Activated CD4-positive, alpha-beta memory T cell treated with anti-CD3 and anti-CD28 coated beads for 36 hours (primary cell): ENCODE measurements at regions of chr22 and their contacts with region 1.

Region 1: GRCh38 chr22:39319270-39320022 is at the start of gene RPL3:
- DNase-seq: peak; percentile 97
- H3K4me3 Mint-ChIP-seq: peak within 1 kb of the TSS; percentile 100
- H3K27ac Mint-ChIP-seq: peak within 1 kb of the TSS; percentile 99
- H3K4me1 Mint-ChIP-seq: peaks cover 37% of the 10 kb centered on the region
- H3K27me3 Mint-ChIP-seq: no peaks in the 10 kb centered on the region
- total RNA-seq, gene RPL3: 2,986 to 3,013 TPM

Region 2: DNA sequence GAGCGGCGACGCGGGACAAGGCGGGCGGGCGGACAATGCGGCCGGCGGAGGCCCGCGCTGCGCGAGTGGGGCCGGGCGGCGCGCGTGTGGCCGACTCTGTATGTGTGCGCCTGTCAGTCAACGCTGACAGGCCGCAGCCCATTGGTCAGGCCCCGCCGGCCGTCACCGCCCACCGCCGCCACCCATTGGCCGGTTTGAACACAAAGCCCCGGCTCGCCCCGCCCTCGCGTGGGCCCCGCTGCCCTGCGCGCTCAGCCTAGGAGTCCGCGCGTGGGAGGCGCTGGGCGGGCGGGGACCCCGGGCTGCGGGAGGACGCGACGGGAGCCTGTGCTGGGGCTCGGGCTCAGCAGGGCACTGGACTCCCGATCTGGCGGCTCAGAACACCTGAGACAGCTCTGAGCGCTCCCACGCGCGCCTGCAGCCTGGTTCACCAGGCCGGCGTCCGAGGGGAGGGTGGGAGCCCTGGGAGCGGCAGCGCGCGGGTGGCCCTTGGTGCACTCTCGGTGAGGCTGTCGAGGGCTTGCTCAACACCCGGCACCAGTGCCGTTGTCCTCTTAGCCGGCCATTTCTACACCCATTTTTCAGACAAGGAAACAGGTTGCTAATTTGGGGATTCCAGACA is 563.4 kb before region 1 on chr22 and contains the start of gene SUN2:
- CTCF ChIA-PET with region 1: no interaction called
- POLR2A ChIA-PET with region 1: interaction called, 4 read pairs
- intact Hi-C with region 1: loop called (anchors 10 kb)
- DNase-seq: peak; percentile 95
- H3K4me3 Mint-ChIP-seq: peak within 1 kb of the TSS; percentile 88
- H3K27ac Mint-ChIP-seq: peak within 1 kb of the TSS; percentile 93
- H3K4me1 Mint-ChIP-seq: peaks cover 55% of the 10 kb centered on the region
- H3K27me3 Mint-ChIP-seq: no peaks in the 10 kb centered on the region
- total RNA-seq, gene SUN2: 159 to 168 TPM

Region 3: DNA sequence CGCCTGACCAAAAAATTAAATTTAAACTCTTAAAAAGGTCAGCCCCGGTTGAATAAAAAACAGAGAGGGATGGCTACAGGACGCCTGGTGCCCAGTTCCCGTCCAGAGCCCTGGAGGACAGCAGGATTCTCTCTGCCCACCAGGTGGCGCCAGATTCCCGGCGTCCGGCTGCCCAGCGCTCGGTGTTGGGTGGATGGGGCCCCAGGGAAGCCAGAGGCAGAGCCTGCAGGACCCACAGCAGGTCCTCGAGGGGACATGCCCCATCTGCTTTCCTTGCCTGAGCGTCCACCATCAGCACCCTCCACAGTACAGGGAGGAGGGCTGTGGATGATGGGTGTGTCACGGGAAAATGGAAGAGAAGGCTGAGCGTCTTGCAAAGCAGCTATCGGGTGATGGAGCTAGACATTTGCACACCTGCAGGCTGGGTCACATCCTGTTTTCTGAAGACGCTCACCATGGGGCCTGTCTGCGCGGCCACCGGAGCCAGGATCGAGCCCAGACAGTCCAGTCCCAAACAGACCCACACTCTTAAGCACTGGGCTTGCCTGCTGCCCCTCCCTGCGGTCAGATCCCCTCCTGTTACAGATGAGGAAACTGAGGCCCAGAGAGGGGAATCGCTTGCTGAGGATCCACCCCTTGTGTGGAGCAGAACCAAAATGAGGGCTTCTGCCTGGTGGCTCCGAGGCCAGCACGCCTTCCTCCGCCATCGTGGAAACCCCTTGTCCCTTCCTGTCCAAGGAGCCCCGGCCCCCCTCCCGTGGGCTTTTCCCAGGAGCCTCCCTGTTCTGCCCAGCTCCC is 148.4 kb before region 1 on chr22:
- CTCF ChIA-PET with region 1: interaction called, 68 read pairs
- POLR2A ChIA-PET with region 1: interaction called, 18 read pairs
- intact Hi-C with region 1: loop called (anchors 1 kb)
- DNase-seq: peak; percentile 91
- H3K4me3 Mint-ChIP-seq: peak overlapping the region; percentile 37
- H3K27ac Mint-ChIP-seq: peak overlapping the region; percentile 43
- H3K4me1 Mint-ChIP-seq: peaks cover 40% of the 10 kb centered on the region
- H3K27me3 Mint-ChIP-seq: peaks cover 1% of the 10 kb centered on the region

Region 4: GRCh38 chr22:39332441-39333064 is 13.1 kb after region 1 on chr22:
- CTCF ChIA-PET with region 1: interaction called, 23 read pairs
- POLR2A ChIA-PET with region 1: interaction called, 29 read pairs
- intact Hi-C with region 1: no loop called
- DNase-seq: no peak
- H3K4me3 Mint-ChIP-seq: no peak overlapping the region
- H3K27ac Mint-ChIP-seq: peak overlapping the region; percentile 58
- H3K4me1 Mint-ChIP-seq: peaks cover 14% of the 10 kb centered on the region
- H3K27me3 Mint-ChIP-seq: no peaks in the 10 kb centered on the region

Region 5: GRCh38 chr22:39502109-39502788 is 182.8 kb after region 1 on chr22 and contains the start of gene MIEF1:
- CTCF ChIA-PET with region 1: interaction called, 3 read pairs
- POLR2A ChIA-PET with region 1: interaction called, 10 read pairs
- intact Hi-C with region 1: no loop called
- DNase-seq: peak; percentile 98
- H3K4me3 Mint-ChIP-seq: peak within 1 kb of the TSS; percentile 96
- H3K27ac Mint-ChIP-seq: peak within 1 kb of the TSS; percentile 87
- H3K4me1 Mint-ChIP-seq: peaks cover 43% of the 10 kb centered on the region
- H3K27me3 Mint-ChIP-seq: no peaks in the 10 kb centered on the region
- total RNA-seq, gene MIEF1: 40.3 to 43.1 TPM